ENCODE measurements at regions of chr18 and their contacts with region 1.

Region 1: DNA sequence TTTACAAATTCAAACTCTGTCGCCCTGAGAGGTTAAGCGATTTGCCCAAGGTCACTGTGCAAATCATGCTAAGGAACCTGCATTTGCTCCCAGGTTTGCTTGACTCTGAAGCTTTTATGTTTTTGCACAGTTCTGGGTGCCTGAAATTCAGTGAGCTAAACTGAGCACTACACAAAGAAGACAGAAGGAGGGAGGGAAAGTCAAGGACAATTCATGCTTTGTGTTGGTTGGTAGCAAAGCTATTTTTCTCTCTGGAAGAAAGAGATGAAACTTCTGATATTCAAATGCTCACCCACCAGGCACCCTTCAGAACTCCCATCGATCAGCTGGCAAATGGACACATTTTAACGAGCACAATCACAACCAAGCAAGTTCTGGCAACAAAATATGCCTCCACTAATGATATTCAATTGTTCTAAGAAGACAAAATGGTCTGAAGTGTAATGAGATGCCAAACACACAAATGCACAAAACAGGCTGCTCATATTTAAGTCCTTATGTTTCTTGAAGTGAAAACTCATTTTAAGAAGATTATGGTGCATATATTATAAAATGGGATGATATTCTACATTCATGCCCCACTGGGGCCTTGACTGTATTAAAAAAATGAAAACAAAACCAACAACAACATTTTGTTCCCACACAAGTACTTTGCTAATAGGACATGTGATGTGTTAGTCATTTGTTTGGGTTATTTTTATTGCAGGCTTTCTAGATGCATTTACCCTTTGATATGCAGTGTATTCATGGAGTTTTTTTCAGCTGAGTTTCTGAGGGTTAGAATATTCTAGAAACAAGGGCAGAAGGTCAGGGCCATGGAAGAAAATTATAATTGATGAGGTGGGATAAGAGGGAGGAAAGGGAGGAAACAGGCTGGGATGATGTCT is 445.6 kb upstream of the CELF4 start:
- DNase-seq: no peak
- H3K4me3 ChIP-seq: peak overlapping the region in 1 of 59 donors; percentile 13
- H3K27ac ChIP-seq: peak overlapping the region in 58 of 59 donors; percentile 8 to 99 (median 82)
- H3K27me3 ChIP-seq: no peaks in the 10 kb centered on the region
- CTCF ChIP-seq: no peak

Region 2: DNA sequence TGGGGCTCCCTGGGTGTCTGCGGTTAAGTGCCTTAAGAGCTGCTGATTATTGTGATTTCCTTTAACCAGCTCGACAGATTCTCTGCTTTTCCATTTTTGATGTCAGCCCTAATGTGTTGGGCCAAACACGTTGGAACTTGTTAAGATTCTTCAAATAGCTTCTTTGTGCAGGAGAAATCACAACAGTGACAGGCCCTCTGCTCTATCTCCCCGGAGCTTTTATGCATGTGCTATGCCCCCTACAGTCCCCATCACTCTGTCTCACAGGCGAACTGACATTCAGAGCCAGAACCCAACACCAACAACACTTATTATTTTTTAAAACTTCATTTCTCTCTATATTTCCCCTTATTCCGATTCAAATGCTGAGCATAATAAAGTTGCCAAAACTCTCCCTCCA is 73.9 kb before region 1 on chr18:
- intact Hi-C with region 1: loop called in 1 of 2 experiments (anchors 2 kb)
- DNase-seq: no peak
- H3K4me3 ChIP-seq: no peak overlapping the region
- H3K27ac ChIP-seq: peak overlapping the region in 1 of 59 donors; percentile 87
- H3K27me3 ChIP-seq: no peaks in the 10 kb centered on the region
- CTCF ChIP-seq: peak in 1 of 56 donors; percentile 18

Region 3: GRCh38 chr18:38077229-38077628 is 66.0 kb after region 1 on chr18:
- intact Hi-C with region 1: no loop called
- DNase-seq: peak in 2 of 10 donors; percentile 44 to 46
- H3K4me3 ChIP-seq: no peak overlapping the region
- H3K27ac ChIP-seq: no peak overlapping the region
- H3K27me3 ChIP-seq: peaks cover 0 to 3% (median 0%) of the 10 kb centered on the region in 45 donors
- CTCF ChIP-seq: no peak